ENCODE measurements at regions of chr14 and their contacts with region 1.

Region 1: GRCh38 chr14:24146978-24147760 is at the start of gene RNF31:
- DNase-seq: peak; percentile 94

Region 2: DNA sequence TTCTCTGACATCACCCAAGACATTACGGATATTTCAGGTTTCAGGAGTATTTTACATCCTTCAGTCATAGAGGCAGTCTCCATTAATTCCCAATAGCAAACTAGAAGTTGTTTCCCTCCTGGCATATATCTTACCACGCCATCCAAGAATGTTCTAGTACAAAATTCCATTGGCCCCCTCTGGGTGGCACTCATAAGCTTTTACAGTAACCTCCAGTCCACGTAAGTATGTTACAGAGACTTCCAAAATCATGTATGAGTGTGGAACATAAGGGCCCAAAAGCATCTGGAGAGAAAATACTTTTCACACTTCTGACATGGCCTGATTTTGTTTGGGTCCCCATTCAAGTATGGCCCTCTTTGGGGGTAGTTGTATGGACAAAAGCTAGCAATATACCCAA is 251.7 kb before region 1 on chr14:
- CTCF ChIA-PET with region 1: no interaction called
- POLR2A ChIA-PET with region 1: no interaction called
- DNase-seq: no peak

Region 3: GRCh38 chr14:24058260-24058950 is 88.8 kb before region 1 on chr14:
- CTCF ChIA-PET with region 1: interaction called, 13 read pairs
- POLR2A ChIA-PET with region 1: interaction called, 12 read pairs
- DNase-seq: peak; percentile 85

Region 4: DNA sequence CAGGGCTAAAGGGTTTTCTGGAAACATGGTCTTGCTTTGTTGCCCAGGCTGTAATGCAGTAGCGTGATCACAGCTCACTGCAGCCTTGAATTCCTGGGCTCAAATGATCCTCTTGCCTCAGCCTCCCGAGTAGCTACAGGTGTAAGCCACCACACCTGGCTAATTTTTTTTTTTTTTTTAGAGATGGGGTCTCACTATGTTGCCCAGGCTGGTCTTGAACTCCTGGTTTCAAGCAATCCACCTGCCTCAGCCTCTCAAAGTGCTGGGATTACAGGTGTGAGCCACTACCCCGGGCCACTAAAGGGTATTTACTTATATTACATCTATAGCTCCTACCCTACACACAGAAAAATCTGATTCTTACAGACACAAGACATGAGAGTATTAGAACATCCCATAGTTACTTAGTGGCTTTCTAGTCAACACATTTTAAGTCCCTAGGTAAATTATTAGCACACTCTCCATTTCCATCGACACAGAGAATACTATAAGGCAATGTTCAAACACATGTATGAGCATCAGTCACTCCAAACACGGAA is 38.8 kb before region 1 on chr14:
- CTCF ChIA-PET with region 1: interaction called, 12 read pairs
- POLR2A ChIA-PET with region 1: interaction called, 56 read pairs
- DNase-seq: no peak

Region 5: GRCh38 chr14:24135834-24136542 is 11.2 kb before region 1 on chr14 and contains the start of gene PSME1:
- CTCF ChIA-PET with region 1: no interaction called
- POLR2A ChIA-PET with region 1: interaction called, 34 read pairs
- DNase-seq: peak; percentile 91

Region 6: DNA sequence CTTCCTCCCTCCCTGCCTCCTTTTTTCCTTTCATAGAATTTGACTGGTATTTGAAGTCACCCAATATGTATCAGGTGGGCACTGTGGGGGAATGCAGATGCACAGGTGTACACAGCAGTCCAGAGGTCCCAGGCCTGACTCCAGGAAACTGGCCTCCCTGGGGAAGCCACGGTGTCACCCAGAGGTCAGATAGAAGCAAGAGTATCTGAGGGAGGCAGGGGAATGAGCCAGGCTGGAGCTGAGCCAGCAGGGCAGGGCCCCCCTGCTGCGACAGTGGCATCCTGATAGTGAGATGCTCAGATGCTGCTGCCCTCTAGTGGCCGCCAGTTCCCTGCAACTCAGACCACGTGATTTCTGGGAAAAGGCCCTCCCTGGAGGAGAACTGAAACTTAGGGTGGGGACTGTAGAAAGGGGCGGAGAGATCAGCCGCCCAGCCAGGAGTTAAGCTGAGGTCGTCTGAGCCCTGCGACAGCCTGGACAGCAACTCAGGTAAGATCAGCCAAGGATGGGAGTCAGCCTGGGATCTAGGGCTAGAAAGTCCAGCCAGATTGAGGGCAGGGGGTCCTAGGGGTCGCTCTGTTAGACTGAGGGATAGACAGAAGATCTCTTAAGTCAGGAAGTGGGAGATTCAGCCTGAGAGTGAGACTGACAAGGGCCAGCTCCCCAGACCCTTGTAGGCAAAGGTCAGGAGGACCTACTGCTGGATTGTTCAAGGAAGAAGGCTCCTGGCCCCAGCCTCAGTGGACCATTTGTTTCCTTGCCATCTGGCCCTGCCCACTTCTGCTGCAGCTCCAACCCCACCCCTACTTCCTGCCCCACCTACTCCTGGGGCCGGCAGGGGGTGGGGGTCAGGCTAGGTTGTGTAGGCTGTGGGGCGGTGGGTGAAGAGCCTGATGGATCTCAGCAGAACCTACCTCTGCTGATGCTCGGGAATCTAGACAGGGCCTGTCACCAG is 14.0 kb after region 1 on chr14 and contains the start of gene IRF9:
- CTCF ChIA-PET with region 1: interaction called, 24 read pairs
- POLR2A ChIA-PET with region 1: interaction called, 26 read pairs
- DNase-seq: peak; percentile 92

Region 7: GRCh38 chr14:24195191-24196070 is 48.3 kb after region 1 on chr14 and contains the start of gene TM9SF1:
- CTCF ChIA-PET with region 1: no interaction called
- POLR2A ChIA-PET with region 1: interaction called, 16 read pairs
- DNase-seq: peak; percentile 90

Region 8: GRCh38 chr14:24212924-24213865 is 66.0 kb after region 1 on chr14 and contains the start of gene CHMP4A:
- CTCF ChIA-PET with region 1: no interaction called
- POLR2A ChIA-PET with region 1: interaction called, 14 read pairs
- DNase-seq: peak; percentile 96

Region 9: GRCh38 chr14:24408764-24409163 is 261.6 kb after region 1 on chr14:
- CTCF ChIA-PET with region 1: no interaction called
- POLR2A ChIA-PET with region 1: no interaction called
- DNase-seq: no peak